ENCODE measurements at regions of chr6 and their contacts with region 1.

Region 1: DNA sequence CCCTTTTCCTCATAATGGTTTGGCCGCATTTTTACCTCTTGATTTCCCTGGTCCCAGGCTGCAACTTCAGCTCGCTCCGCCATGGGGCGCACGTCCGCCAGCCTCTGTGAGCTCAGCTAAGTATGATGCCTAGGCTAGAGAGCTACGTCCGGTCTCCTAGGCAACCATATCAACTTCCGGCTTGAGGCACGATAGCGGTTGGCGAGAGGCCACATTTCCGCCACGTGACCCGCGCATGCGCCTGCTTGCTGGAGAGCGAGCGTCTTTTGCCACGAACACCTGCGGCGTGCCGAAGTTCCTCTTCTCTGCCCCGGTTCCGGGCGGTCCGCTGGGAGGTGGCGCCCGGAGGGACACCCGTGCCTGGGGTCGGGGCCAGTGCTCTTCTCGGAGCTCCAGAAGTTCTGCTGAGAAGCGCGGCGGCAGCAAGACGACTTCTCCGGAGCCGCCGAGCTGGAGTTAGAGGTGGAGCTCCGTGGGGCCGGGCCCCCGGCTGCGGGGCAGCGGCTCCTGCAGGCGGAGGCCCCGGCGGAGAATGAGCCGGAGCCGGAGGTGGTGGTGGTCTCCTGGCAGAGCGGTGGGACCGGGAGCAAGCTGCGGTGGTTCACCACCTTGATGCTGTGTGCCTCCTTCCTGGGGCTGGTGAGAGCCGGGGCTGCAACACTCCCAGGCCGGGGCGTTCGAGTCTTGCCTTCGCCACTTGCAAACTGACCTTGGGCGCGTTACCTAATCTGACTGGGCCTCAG is 172.0 kb downstream of the SLC16A10 start:
- DNase-seq: peak; percentile 99 to 100 (median 99)
- H3K4me3 ChIP-seq: peak overlapping the region; percentile 49
- H3K4me3 Mint-ChIP-seq: peak overlapping the region; percentile 81 to 93 (median 87)
- H3K27ac ChIP-seq: peak overlapping the region; percentile 86
- H3K27ac Mint-ChIP-seq: peak overlapping the region; percentile 83 to 97 (median 94)
- H3K4me1 ChIP-seq: peaks cover 26% of the 10 kb centered on the region
- H3K4me1 Mint-ChIP-seq: peaks cover 29 to 41% (median 35%) of the 10 kb centered on the region in 3 donors
- H3K27me3 ChIP-seq: no peaks in the 10 kb centered on the region
- H3K27me3 Mint-ChIP-seq: peaks cover 7 to 10% of the 10 kb centered on the region in 2 donors

Region 2: DNA sequence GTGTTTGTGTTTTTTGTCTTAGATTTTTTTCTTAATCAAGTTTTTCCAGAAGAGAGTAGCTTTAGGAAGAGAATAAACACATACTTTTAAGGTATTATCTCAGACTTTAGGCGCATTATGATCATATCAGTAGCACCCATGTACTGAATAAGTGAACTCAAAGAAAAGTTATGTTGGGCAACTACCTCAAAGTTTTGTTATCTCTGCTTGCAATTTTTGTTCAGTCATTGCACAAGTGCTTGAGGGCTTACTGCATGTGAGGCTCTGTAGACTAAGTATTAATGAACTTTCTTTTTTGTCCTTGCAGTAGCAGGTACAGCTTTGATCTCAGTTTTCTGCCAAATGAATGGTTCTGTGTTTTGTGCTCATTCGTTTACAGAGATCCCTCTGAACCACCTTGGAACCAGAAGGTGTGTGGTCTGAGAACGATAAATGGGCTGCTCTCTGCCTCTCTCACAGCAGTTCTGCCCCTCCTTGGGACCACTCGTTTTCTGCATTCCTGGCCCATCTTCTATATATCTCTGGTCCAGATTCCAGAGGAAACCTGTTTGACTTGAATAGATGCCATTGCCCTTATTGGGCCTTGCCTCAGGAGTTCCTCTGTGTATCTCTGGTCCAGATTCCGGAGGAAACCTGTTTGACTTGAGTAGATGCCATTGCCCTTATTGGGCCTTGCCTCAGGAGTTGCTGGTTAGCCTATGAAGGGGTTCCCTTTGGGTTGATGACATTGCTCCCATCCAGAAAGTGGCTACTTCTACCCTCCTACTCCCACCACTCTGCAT is 17.3 kb after region 1 on chr6:
- CTCF ChIA-PET with region 1: interaction called, 10 read pairs
- POLR2A ChIA-PET with region 1: no interaction called
- DNase-seq: no peak
- H3K4me3 ChIP-seq: no peak overlapping the region
- H3K4me3 Mint-ChIP-seq: no peak overlapping the region
- H3K27ac ChIP-seq: no peak overlapping the region
- H3K27ac Mint-ChIP-seq: peak overlapping the region in 1 of 8 donors; percentile 64
- H3K4me1 ChIP-seq: no peaks in the 10 kb centered on the region
- H3K4me1 Mint-ChIP-seq: peaks cover 6 to 18% (median 7%) of the 10 kb centered on the region in 3 donors
- H3K27me3 ChIP-seq: no peaks in the 10 kb centered on the region
- H3K27me3 Mint-ChIP-seq: no peaks in the 10 kb centered on the region

Region 3: GRCh38 chr6:111406200-111406721 is 147.0 kb after region 1 on chr6:
- CTCF ChIA-PET with region 1: no interaction called
- POLR2A ChIA-PET with region 1: no interaction called
- DNase-seq: no peak
- H3K4me3 ChIP-seq: no peak overlapping the region
- H3K4me3 Mint-ChIP-seq: no peak overlapping the region
- H3K27ac ChIP-seq: no peak overlapping the region
- H3K27ac Mint-ChIP-seq: peak overlapping the region in 3 of 8 donors; percentile 17 to 49 (median 24)
- H3K4me1 ChIP-seq: no peaks in the 10 kb centered on the region
- H3K4me1 Mint-ChIP-seq: peaks cover 5 to 13% (median 12%) of the 10 kb centered on the region in 3 donors
- H3K27me3 ChIP-seq: no peaks in the 10 kb centered on the region
- H3K27me3 Mint-ChIP-seq: no peaks in the 10 kb centered on the region

Region 4: DNA sequence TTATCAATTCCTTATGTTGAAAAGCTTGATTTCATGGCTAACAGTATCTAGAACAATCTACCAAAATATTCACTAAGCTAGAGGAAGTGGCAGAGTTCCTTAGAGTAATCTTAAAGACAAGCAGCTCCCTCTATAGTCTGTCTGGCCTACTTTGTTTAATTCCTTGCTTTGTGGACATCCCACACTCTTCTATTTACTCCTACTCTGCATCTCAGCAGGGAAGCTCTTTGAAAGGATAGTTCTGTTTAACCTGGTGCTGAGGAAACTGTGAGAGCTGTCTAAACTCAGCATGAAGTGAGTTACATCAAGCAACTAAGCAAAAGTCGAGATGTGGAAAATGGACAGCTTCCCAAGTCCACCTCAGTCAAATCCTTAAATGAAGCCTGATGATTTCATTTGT is 219.5 kb after region 1 on chr6:
- CTCF ChIA-PET with region 1: interaction called, 47 read pairs
- POLR2A ChIA-PET with region 1: interaction called, 49 read pairs
- DNase-seq: peak in 2 of 5 donors; percentile 36 to 37
- H3K4me3 ChIP-seq: no peak overlapping the region
- H3K4me3 Mint-ChIP-seq: peak overlapping the region in 2 of 7 donors; percentile 11 to 69
- H3K27ac ChIP-seq: no peak overlapping the region
- H3K27ac Mint-ChIP-seq: peak overlapping the region in 6 of 8 donors; percentile 2 to 76 (median 58)
- H3K4me1 ChIP-seq: peaks cover 17% of the 10 kb centered on the region
- H3K4me1 Mint-ChIP-seq: peaks cover 36 to 54% (median 51%) of the 10 kb centered on the region in 3 donors
- H3K27me3 ChIP-seq: no peaks in the 10 kb centered on the region
- H3K27me3 Mint-ChIP-seq: peaks cover 0 to 2% of the 10 kb centered on the region in 2 donors

Region 5: GRCh38 chr6:111483736-111484632 is 224.7 kb after region 1 on chr6:
- CTCF ChIA-PET with region 1: interaction called, 47 read pairs
- POLR2A ChIA-PET with region 1: interaction called, 49 read pairs
- DNase-seq: peak in 3 of 5 donors; percentile 76 to 87 (median 79)
- H3K4me3 ChIP-seq: peak overlapping the region; percentile 91
- H3K4me3 Mint-ChIP-seq: peak overlapping the region; percentile 89 to 99 (median 97)
- H3K27ac ChIP-seq: peak overlapping the region; percentile 95
- H3K27ac Mint-ChIP-seq: peak overlapping the region; percentile 95 to 99 (median 98)
- H3K4me1 ChIP-seq: peaks cover 32% of the 10 kb centered on the region
- H3K4me1 Mint-ChIP-seq: peaks cover 41 to 68% (median 58%) of the 10 kb centered on the region in 3 donors
- H3K27me3 ChIP-seq: no peaks in the 10 kb centered on the region
- H3K27me3 Mint-ChIP-seq: no peaks in the 10 kb centered on the region